ENCODE measurements at regions of chr3 and their contacts with region 1.

Region 1: DNA sequence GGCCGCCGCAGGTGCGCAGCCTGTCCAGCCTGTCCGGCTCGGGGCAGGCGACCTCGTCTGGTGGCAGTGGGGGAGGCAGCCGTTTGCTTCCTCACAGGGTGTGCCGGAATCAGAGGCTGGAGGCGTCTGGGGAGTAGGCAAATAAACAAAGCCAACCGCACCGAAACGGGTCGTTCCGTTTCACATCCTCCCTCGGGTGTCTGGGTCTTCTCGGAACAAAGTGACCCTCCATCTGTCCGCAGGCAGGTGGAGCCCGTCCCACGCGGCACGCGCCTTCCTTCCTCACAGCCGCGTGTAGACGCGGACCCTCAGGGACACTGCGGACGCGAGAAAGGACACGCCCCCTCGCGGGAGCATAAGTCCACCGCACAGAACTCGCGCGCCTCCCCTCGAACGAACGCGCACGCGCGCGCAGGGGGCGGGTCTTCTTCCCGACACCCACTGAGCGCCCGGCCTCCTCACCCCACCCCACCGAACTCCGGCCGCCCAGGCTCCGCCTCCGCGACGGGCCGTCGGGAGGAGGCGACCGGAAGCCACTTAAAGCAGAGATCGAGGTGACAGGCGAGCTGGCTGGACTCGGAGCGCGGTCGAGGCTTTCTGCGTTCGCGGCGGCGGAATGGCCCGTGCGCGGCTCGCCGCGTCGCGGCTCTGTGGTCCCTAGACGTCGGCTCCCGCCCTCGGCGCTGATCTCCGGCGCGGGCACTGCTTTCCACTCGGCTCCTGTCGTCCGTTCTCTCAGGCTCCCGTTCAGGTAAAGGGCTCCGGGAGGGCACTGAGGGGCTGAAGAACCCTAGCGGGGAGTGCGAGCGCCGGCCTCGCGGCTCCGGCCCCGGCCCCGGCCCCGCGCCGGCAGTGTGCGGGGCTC is at the start of gene TIPARP:
- DNase-seq: peak; percentile 97 to 99 (median 98)
- ATAC-seq: peak; percentile 90
- H3K4me3 ChIP-seq: peak within 1 kb of the TSS; percentile 89
- H3K27ac ChIP-seq: peak within 1 kb of the TSS; percentile 70
- H3K4me1 ChIP-seq: peaks cover 21 to 33% of the 10 kb centered on the region in 2 experiments; a peak in 4 of 5 replicates
- H3K27me3 ChIP-seq: no peaks in the 10 kb centered on the region
- CTCF ChIP-seq: peak; percentile 84 to 95 (median 94)
- EP300 ChIP-seq: no peak; the same call in 1 of the 2 replicates
- POLR2A ChIP-seq: peak; percentile 93
- RAD21 ChIP-seq: peak; percentile 95 to 98
- polyA plus RNA-seq, gene TIPARP: 2.4 to 3.5 TPM

Region 2: DNA sequence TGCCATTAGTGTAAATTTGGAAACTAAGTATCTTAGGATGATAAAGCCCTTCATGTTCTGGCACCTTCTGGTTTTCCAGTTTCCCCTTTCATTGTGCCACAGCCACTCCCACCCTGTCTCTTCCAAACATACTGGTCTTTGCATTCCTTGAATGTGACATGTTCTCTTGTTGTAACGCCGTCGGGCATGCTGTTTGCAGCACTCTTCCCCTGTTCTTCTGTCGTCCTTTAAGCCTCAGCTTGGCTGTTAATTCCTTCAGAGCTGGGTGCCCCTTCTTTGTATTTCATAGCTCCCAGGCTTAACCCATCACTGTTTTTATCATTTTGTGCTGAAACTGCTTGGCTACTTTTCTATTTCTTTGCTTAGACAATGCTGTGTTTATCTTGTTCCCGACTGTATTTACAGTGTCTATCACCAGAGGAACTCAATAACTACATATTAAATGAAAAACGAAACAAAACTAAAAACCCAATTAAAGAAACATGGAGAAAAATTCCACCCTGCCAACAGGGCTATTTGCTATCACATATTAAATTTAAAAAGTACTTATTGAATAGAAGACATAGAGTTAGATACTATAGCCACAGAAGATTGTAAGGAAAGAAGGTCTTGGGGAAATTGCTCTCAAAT is 649.3 kb before region 1 on chr3:
- CTCF ChIA-PET with region 1: no interaction called
- POLR2A ChIA-PET with region 1: no interaction called
- in situ Hi-C with region 1: loop called (anchors 25 kb)
- intact Hi-C with region 1: no loop called
- DNase-seq: no peak
- ATAC-seq: no peak
- H3K4me3 ChIP-seq: no peak overlapping the region
- H3K27ac ChIP-seq: no peak overlapping the region
- H3K4me1 ChIP-seq: no peaks in the 10 kb centered on the region
- H3K27me3 ChIP-seq: peaks cover 3 to 4% of the 10 kb centered on the region in 2 experiments; a peak in 2 of 5 replicates
- CTCF ChIP-seq: no peak
- EP300 ChIP-seq: no peak
- POLR2A ChIP-seq: no peak
- RAD21 ChIP-seq: no peak

Region 3: GRCh38 chr3:156460206-156460611 is 214.1 kb before region 1 on chr3:
- CTCF ChIA-PET with region 1: no interaction called
- POLR2A ChIA-PET with region 1: no interaction called
- in situ Hi-C with region 1: no loop called
- intact Hi-C with region 1: loop called (anchors 10 kb)
- DNase-seq: peak; percentile 50 to 75 (median 64)
- ATAC-seq: peak; percentile 72
- H3K4me3 ChIP-seq: no peak overlapping the region
- H3K27ac ChIP-seq: peak overlapping the region; percentile 68
- H3K4me1 ChIP-seq: peaks cover 9 to 71% of the 10 kb centered on the region in 2 experiments; a peak in 4 of 5 replicates
- H3K27me3 ChIP-seq: no peaks in the 10 kb centered on the region
- CTCF ChIP-seq: no peak
- EP300 ChIP-seq: peak; percentile 93
- POLR2A ChIP-seq: no peak
- RAD21 ChIP-seq: no peak

Region 4: GRCh38 chr3:156576651-156577343 is 97.5 kb before region 1 on chr3:
- CTCF ChIA-PET with region 1: no interaction called
- POLR2A ChIA-PET with region 1: no interaction called
- in situ Hi-C with region 1: no loop called
- intact Hi-C with region 1: loop called (anchors 1 kb)
- DNase-seq: no peak
- ATAC-seq: peak; percentile 50
- H3K4me3 ChIP-seq: no peak overlapping the region
- H3K27ac ChIP-seq: no peak overlapping the region
- H3K4me1 ChIP-seq: peaks cover 3 to 32% of the 10 kb centered on the region in 2 experiments; a peak in 4 of 5 replicates
- H3K27me3 ChIP-seq: no peaks in the 10 kb centered on the region
- CTCF ChIP-seq: peak in 1 of 3 experiments; percentile 45; a peak in 3 of 6 replicates
- EP300 ChIP-seq: no peak
- POLR2A ChIP-seq: no peak
- RAD21 ChIP-seq: peak; percentile 59 to 67

Region 5: DNA sequence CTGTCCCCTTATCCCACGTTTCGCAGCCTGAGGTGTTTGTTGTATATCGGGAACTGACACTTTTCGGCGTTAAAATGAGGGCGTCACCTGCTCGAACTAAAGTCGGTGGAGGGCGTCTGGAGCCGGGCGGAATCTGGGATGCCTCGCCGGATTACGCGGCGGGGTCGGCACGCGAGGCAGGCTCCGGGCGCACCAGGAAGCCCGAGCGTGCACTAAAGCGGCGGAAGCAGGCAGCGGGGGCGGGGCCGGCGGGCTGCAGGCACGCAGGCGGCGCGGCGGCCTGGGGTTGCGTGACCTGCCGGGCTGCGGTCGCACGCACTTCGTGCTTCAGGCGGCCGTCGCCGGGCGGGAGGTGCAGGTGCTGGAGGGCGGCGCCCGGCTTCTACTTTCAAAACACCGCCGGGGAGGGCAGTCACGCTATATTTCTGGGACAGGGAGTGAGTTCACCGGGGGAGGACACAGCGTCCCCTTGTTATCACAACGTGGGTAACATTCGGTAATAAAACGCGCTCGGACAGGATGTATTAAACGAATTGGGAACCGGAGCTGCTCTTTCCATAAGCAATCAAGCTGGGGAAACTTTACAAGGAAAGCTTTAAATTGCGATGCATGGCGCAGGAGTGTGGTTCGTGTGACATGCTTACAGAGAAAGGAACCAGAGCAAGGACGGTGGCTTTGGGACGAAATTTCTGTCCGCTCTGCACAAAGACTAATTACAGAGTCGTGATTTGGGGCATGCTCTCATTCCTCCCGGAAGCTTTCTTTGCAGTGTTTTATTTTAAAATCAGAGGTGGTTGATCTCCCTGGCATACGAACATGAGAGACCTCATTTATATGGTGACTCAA is 142.7 kb after region 1 on chr3:
- CTCF ChIA-PET with region 1: no interaction called
- POLR2A ChIA-PET with region 1: no interaction called
- in situ Hi-C with region 1: no loop called
- intact Hi-C with region 1: loop called (anchors 5 kb)
- DNase-seq: peak; percentile 58 to 80 (median 64)
- ATAC-seq: peak; percentile 85
- H3K4me3 ChIP-seq: peak overlapping the region; percentile 37
- H3K27ac ChIP-seq: peak overlapping the region; percentile 66
- H3K4me1 ChIP-seq: peaks cover 14 to 22% of the 10 kb centered on the region in 2 experiments
- H3K27me3 ChIP-seq: no peaks in the 10 kb centered on the region
- CTCF ChIP-seq: peak; percentile 15 to 16 (median 15); a peak in 1 of 6 replicates
- EP300 ChIP-seq: no peak
- POLR2A ChIP-seq: 0 out of 2 replicates have a peak, but pooled peaks have one; percentile 49
- RAD21 ChIP-seq: no peak

Region 6: GRCh38 chr3:157088601-157089454 is 414.6 kb after region 1 on chr3:
- CTCF ChIA-PET with region 1: no interaction called
- POLR2A ChIA-PET with region 1: interaction called, 14 read pairs
- in situ Hi-C with region 1: no loop called
- intact Hi-C with region 1: no loop called
- DNase-seq: peak; percentile 94 to 99 (median 98)
- ATAC-seq: peak; percentile 92
- H3K4me3 ChIP-seq: peak overlapping the region; percentile 48
- H3K27ac ChIP-seq: peak overlapping the region; percentile 90
- H3K4me1 ChIP-seq: peaks cover 24 to 54% of the 10 kb centered on the region in 2 experiments
- H3K27me3 ChIP-seq: no peaks in the 10 kb centered on the region
- CTCF ChIP-seq: 0 out of 6 replicates have a peak, but pooled peaks of 1 of the 3 experiments have one; percentile 4
- EP300 ChIP-seq: peak; percentile 61
- POLR2A ChIP-seq: peak; percentile 78
- RAD21 ChIP-seq: peak in 1 of 2 experiments; percentile 4; a peak in 2 of 4 replicates

Region 7: DNA sequence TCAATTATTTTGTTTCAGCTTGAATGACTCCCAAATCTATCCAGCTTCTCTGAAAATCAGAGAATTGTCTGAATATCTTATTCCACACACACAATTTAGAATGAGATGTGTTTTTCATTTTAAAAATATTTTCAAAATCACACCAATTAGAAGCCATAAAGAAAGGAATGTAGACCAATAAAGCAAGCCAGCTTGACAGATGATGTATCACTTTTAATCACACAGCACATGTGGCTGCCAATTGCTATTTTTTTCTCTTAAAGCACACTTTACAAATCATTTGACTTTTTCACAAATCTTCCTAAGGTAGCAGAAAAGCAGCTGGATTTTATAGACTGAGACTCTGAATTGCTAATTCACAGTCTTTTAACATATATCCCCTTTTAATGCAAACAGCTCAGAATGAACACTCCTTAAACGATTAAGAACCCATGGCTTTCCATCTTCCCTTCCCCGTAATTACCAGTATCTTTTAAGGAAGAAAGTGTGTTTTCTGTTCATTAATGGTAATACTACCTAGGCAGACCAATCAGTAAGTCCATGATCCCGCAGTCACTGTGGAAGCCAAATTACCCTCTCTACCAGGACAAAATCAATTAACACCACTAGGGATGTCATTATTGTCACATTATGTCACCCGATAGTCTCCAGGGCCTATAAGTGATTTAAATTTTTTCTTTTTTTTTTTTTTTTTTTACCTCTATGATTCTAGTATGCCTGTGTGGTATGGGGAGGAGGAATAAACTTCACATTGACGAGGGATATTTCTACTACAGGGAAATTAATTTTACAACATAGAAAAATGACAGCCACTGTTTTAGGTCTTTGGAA is 1078.9 kb after region 1 on chr3:
- CTCF ChIA-PET with region 1: no interaction called
- POLR2A ChIA-PET with region 1: no interaction called
- in situ Hi-C with region 1: no loop called
- intact Hi-C with region 1: no loop called
- DNase-seq: no peak
- ATAC-seq: no peak
- H3K4me3 ChIP-seq: no peak overlapping the region
- H3K27ac ChIP-seq: no peak overlapping the region
- H3K4me1 ChIP-seq: no peaks in the 10 kb centered on the region
- H3K27me3 ChIP-seq: peaks cover 3 to 7% of the 10 kb centered on the region in 2 experiments; a peak in 1 of 5 replicates
- CTCF ChIP-seq: no peak
- EP300 ChIP-seq: no peak
- POLR2A ChIP-seq: no peak
- RAD21 ChIP-seq: no peak

Measured in K562 (cell line).